MCF 10A (cell line): ENCODE measurements at regions of chr6 and their contacts with region 1.

Region 1: GRCh38 chr6:31958741-31959739 is at the starts of genes NELFE and SKIC2:
- DNase-seq: peak; percentile 96
- H3K4me3 Mint-ChIP-seq: peak within 1 kb of the TSS; percentile 88
- H3K27ac Mint-ChIP-seq: peak within 1 kb of the TSS; percentile 97
- H3K4me1 Mint-ChIP-seq: peaks cover 9% of the 10 kb centered on the region
- H3K27me3 Mint-ChIP-seq: no peaks in the 10 kb centered on the region
- CTCF ChIP-seq: no peak
- total RNA-seq, gene NELFE: 90.7 and 113 TPM in 2 replicates
- total RNA-seq, gene SKIC2: 53.1 and 66.2 TPM in 2 replicates

Region 2: GRCh38 chr6:31776989-31777666 is 181.9 kb before region 1 on chr6 and contains the start of gene VWA7:
- CTCF ChIA-PET with region 1: no interaction called
- POLR2A ChIA-PET with region 1: no interaction called
- intact Hi-C with region 1: no loop called
- DNase-seq: peak; percentile 95
- H3K4me3 Mint-ChIP-seq: peak within 1 kb of the TSS; percentile 26
- H3K27ac Mint-ChIP-seq: no peak within 1 kb of the TSS
- H3K4me1 Mint-ChIP-seq: peaks cover 26% of the 10 kb centered on the region
- H3K27me3 Mint-ChIP-seq: no peaks in the 10 kb centered on the region
- CTCF ChIP-seq: no peak
- total RNA-seq, gene VWA7: 2.0 and 3.1 TPM in 2 replicates

Region 3: GRCh38 chr6:31901953-31902643 is 56.9 kb before region 1 on chr6 and contains the start of gene ZBTB12:
- CTCF ChIA-PET with region 1: interaction called, 32 read pairs
- POLR2A ChIA-PET with region 1: interaction called, 41 read pairs
- intact Hi-C with region 1: no loop called
- DNase-seq: peak; percentile 93
- H3K4me3 Mint-ChIP-seq: peak within 1 kb of the TSS; percentile 67
- H3K27ac Mint-ChIP-seq: peak within 1 kb of the TSS; percentile 33
- H3K4me1 Mint-ChIP-seq: peaks cover 24% of the 10 kb centered on the region
- H3K27me3 Mint-ChIP-seq: no peaks in the 10 kb centered on the region
- CTCF ChIP-seq: no peak
- total RNA-seq, gene ZBTB12: 3.6 and 4.0 TPM in 2 replicates

Region 4: GRCh38 chr6:32224696-32225095 is 265.7 kb after region 1 on chr6:
- CTCF ChIA-PET with region 1: no interaction called
- POLR2A ChIA-PET with region 1: no interaction called
- intact Hi-C with region 1: no loop called
- DNase-seq: no peak
- H3K4me3 Mint-ChIP-seq: no peak overlapping the region
- H3K27ac Mint-ChIP-seq: no peak overlapping the region
- H3K4me1 Mint-ChIP-seq: peaks cover 5% of the 10 kb centered on the region
- H3K27me3 Mint-ChIP-seq: peaks cover 27% of the 10 kb centered on the region
- CTCF ChIP-seq: no peak